Endothelial cell of umbilical vein (primary cell): ENCODE measurements at regions of chr1 and their contacts with region 1.

Region 1: DNA sequence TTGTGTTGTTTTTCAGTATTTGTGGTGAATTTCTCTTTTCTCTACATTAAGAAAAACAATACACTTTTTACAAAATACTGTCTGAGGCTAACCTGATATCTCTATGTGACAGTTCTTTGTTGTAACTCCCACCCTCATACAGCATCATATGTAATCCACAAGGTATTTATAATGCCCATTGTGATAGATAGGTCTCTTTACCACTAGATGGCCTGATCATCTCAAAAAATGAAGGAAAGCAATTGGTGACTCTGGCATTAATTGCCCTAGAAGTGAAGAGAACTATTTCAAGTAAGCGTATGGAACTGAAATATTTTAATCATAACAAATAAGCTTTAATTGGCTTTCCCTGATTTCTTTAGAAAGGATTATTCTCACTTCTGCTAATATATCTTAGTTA is 36.2 kb upstream of the HFM1 start:
- DNase-seq: peak; percentile 12
- H3K4me3 ChIP-seq: no peak overlapping the region
- H3K27ac ChIP-seq: no peak overlapping the region
- H3K4me1 ChIP-seq: no peaks in the 10 kb centered on the region
- H3K27me3 ChIP-seq: no peaks in the 10 kb centered on the region
- CTCF ChIP-seq: no peak
- POLR2A ChIP-seq: no peak

Region 2: GRCh38 chr1:91511386-91511785 is 70.5 kb after region 1 on chr1:
- CTCF ChIA-PET with region 1: interaction called, 4 read pairs
- POLR2A ChIA-PET with region 1: no interaction called
- dilution Hi-C with region 1: no loop called
- intact Hi-C with region 1: loop called (anchors 2 kb)
- DNase-seq: peak; percentile 57
- H3K4me3 ChIP-seq: no peak overlapping the region
- H3K27ac ChIP-seq: no peak overlapping the region
- H3K4me1 ChIP-seq: no peaks in the 10 kb centered on the region
- H3K27me3 ChIP-seq: no peaks in the 10 kb centered on the region
- CTCF ChIP-seq: peak; percentile 24 to 43
- POLR2A ChIP-seq: no peak

Region 3: DNA sequence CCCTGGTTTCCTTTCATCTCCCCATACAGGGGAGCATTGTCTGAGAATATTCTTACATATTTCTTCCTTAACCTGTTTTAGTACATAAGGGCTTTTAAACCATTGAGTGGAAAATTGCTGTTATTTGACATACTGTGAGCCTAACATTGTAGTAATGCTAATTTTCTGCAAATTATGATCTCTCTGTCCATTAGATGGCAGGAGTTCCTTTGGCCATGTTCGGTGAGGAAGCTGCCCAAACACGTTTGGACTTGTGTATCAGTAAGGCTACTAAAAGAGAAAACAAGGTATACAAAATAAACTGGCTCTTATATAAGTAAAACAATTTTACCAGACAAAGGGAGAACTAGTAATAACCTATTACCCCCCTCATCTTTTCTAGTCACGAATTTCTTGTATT is 89.0 kb after region 1 on chr1:
- CTCF ChIA-PET with region 1: no interaction called
- POLR2A ChIA-PET with region 1: no interaction called
- dilution Hi-C with region 1: no loop called
- intact Hi-C with region 1: no loop called
- DNase-seq: peak; percentile 43
- H3K4me3 ChIP-seq: no peak overlapping the region
- H3K27ac ChIP-seq: no peak overlapping the region
- H3K4me1 ChIP-seq: no peaks in the 10 kb centered on the region
- H3K27me3 ChIP-seq: no peaks in the 10 kb centered on the region
- CTCF ChIP-seq: peak in 1 of 2 donors; percentile 2
- POLR2A ChIP-seq: no peak